ENCODE measurements at regions of chr17 and their contacts with region 1.

Region 1: DNA sequence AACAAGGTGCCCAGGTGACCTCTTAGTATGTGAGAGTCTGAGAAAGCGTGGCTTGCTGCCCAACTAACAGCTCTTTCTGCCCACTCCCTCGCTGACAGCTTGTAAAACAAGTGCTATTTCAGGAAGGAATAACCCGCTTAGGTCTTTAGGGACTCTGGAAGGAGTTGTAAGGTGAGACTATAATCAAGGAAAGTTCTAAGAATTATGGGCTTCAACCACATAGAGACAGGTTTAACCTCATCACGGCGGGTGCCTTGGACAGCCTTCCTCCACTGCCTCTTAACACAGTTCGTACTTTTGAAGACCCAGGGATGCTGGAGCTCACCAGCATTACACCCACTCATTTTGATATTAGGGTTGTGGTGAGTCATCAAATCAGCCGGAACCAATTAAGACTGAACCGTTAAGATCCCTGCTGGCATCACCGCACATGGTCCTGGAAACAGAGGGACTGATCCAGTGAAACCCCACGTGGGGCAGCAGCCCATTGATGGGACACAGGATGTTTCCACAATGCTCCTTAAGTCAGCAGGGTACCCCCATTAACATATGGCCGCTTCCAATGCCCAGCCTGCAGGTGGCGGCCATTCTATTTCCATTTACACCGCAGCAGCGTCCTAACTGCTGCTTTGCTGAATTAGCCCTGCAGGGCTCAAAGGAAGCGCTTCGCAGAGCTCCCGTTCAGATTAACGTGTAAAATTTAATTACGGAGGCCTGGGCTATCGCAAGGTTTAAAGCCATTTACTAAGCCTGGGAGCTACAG is 176.6 kb upstream of the SDK2 start:
- DNase-seq: no peak
- H3K4me3 ChIP-seq: no peak overlapping the region
- H3K27ac ChIP-seq: no peak overlapping the region
- H3K4me1 ChIP-seq: no peaks in the 10 kb centered on the region
- H3K27me3 ChIP-seq: no peaks in the 10 kb centered on the region
- CTCF ChIP-seq: peak in 3 of 4 experiments; percentile 34 to 49 (median 35)
- POLR2A ChIP-seq: no peak

Region 2: DNA sequence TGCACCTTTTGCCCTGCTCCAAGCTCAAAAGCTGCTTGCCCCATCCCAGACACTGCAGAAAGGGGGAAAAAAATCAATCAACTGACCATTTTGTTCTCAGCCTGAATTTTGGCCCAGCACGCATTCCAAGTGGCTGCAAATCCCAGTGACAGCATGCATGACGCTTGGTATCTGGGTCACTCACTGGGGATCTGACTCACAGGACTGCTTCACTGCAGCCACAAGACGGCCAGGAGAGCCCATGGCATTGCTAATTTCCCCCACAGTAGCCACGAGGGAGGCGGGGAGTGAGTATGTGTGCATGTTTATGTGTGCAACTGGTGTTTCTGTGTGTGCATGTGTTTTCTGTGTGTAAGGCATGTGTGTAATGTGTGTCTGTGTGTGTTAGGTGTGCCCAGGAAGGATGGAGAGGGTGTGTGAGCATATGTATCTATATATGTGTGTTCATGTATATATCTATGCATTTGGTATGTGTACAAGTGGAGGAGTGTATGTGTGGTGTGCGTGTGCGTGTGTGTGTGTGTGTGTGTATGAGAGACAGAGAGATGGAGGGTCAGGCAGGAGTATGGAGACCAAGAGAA is 210.4 kb before region 1 on chr17:
- intact Hi-C with region 1: no loop called
- DNase-seq: no peak
- H3K4me3 ChIP-seq: no peak overlapping the region
- H3K27ac ChIP-seq: no peak overlapping the region
- H3K4me1 ChIP-seq: no peaks in the 10 kb centered on the region
- H3K27me3 ChIP-seq: no peaks in the 10 kb centered on the region
- CTCF ChIP-seq: no peak
- POLR2A ChIP-seq: no peak

Region 3: DNA sequence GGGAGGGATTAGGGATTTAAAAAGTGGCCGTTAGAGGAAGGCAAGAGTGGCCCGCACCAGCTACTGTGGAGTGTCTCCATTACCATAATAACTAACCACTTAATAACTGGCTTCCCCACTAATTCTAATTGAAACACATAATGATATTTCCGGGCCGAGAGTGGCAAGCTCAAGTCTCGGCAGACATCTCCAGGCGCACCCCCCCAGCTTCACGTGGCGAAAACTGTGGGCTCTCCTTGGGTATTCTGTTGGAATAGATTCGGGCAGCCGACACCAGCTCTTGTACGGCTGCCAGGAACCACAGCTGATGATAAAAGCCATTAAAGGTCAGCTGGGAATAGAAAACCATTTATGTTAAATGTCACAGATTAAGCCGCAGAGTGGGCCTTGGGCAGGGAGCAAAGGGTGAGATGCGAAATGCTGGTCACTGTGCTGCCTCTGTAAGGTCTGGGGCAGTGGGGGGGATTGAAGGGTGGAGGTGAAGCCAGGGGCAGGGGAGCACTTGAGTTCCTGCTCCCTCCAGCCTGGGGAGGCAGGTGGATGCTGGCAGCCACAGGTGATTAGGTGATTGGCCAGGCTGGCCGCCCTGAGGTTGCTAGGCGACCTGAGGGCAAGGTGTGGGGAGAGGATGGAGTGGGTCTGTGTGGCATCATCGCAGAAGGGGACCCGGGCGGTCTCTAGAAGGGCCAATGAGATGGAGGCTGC is 61.0 kb before region 1 on chr17:
- intact Hi-C with region 1: loop called (anchors 10 kb)
- DNase-seq: no peak
- H3K4me3 ChIP-seq: no peak overlapping the region
- H3K27ac ChIP-seq: no peak overlapping the region
- H3K4me1 ChIP-seq: no peaks in the 10 kb centered on the region
- H3K27me3 ChIP-seq: no peaks in the 10 kb centered on the region
- CTCF ChIP-seq: no peak
- POLR2A ChIP-seq: no peak

Region 4: DNA sequence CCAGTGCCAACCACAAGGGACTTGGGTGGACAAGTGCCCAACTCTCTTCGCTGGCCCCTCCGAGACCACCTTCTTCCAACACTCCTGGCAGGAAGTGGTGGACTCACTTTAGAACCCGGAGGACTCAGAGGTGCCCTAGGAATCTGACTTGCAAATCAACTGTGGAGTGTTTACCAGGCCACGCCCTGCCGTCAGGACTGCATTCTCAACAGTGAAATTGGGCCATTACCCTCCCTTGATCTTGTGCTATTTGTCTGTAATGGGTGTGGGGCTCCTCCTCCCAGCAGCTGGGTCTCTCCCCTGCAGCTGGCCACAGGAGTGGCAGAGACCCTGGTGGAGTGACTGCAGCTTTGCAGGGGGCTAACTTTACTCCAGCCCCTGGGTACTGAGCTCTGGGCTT is 170.4 kb after region 1 on chr17:
- intact Hi-C with region 1: no loop called
- DNase-seq: no peak
- H3K4me3 ChIP-seq: no peak overlapping the region
- H3K27ac ChIP-seq: no peak overlapping the region
- H3K4me1 ChIP-seq: no peaks in the 10 kb centered on the region
- H3K27me3 ChIP-seq: no peaks in the 10 kb centered on the region
- CTCF ChIP-seq: no peak
- POLR2A ChIP-seq: no peak